PC-9 (cell line): ENCODE measurements at regions of chrX and their contacts with region 1.

Region 1: GRCh38 chrX:16658284-16658683 is 8.3 kb downstream of the S100G start:
- DNase-seq: no peak
- H3K4me3 ChIP-seq: no peak overlapping the region
- H3K27ac ChIP-seq: no peak overlapping the region
- H3K4me1 ChIP-seq: no peaks in the 10 kb centered on the region
- H3K27me3 ChIP-seq: no peaks in the 10 kb centered on the region
- CTCF ChIP-seq: no peak

Region 2: DNA sequence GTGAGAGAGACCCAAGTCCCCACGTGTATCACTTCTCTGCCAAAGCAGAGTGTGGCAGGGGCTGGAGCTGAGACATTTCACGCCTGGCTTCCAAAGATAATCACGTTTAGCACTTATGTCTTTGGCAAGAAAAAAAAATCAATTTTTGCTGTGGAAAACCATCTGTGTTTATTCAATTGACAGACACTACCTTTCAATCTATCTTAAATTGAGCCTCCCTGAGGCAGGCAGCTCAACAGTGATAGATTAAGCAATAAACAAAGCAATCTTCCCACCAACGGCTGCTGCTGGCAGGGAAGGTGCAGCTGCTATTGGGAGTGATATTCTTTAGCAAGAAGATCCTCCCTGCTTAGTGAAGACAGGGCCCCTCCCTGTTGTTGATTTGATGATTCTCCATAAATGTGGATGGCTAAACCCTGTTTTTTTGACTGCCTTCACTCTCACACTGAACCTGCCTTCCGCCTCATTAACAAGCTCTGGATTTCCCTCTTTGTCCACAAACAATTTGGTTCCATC is 502.6 kb before region 1 on chrX:
- CTCF ChIA-PET with region 1: no interaction called
- POLR2A ChIA-PET with region 1: interaction called, 14 read pairs
- intact Hi-C with region 1: no loop called
- DNase-seq: no peak
- H3K4me3 ChIP-seq: no peak overlapping the region
- H3K27ac ChIP-seq: no peak overlapping the region
- H3K4me1 ChIP-seq: peaks cover 6% of the 10 kb centered on the region; the same call in 1 of the 2 replicates
- H3K27me3 ChIP-seq: no peaks in the 10 kb centered on the region
- CTCF ChIP-seq: no peak

Region 3: DNA sequence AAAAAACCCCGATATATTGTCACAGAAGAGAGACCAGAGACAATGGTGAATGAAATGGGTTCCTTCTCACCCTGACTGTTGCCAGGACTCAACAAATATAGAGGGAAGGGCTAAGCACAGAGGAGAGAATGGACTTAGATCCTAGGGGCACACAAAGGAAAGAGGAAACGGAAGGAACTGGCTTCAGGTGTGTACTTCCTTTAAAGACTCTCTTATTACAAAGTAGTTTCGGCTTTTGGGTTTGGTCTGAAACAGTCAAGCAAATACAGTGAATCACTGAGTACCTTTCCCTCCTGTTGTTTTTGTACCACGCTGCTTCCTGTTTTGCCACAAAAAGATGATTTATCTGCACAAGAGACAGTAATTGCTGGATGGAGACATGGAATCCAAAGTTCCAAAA is 54.5 kb before region 1 on chrX:
- CTCF ChIA-PET with region 1: no interaction called
- POLR2A ChIA-PET with region 1: no interaction called
- intact Hi-C with region 1: loop called (anchors 10 kb)
- DNase-seq: no peak
- H3K4me3 ChIP-seq: no peak overlapping the region
- H3K27ac ChIP-seq: no peak overlapping the region
- H3K4me1 ChIP-seq: no peaks in the 10 kb centered on the region
- H3K27me3 ChIP-seq: no peaks in the 10 kb centered on the region
- CTCF ChIP-seq: no peak

Region 4: DNA sequence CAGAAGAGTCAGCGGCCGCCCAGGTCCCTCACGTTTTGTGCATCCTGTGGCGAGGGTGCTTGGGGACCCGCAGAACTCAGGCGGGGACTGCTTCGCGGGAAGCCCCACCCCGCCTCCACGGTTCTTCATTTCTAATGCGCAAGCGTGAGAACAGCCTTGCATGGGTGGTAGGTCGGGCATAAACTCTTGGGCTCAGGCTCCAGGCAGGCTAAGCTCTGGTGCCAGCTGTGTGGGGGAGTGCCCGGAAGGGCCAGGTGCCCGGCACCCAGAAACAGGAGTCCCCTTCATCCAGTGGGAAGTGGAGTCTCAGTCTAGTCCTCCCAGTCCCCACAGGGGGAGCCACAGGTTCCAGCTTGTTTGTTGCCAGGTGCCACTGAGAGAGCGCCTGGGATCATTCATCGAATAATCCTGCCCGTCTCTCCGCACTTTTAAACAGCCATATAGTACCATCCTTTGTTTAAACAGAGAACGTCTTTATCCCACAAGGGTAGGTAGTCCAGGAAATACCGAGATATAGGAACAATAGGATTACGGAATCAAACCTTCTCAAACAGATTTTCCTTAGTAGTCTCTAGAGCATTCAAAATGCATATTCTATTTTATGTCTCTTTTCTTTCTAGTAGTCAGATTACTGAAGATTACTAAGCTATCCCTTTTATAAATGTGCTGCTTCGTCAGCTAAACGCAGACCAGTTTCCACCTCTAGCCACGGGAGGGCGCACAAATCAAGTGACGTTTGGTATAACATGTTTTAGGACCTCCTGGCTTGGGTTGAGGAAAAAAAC is 224.6 kb after region 1 on chrX:
- CTCF ChIA-PET with region 1: no interaction called
- POLR2A ChIA-PET with region 1: no interaction called
- intact Hi-C with region 1: no loop called
- DNase-seq: peak; percentile 56 to 65
- H3K4me3 ChIP-seq: peak overlapping the region; percentile 70
- H3K27ac ChIP-seq: peak overlapping the region; percentile 71
- H3K4me1 ChIP-seq: 0 out of 2 replicates have a peak, but pooled peaks cover 4% of the 10 kb centered on the region
- H3K27me3 ChIP-seq: no peaks in the 10 kb centered on the region
- CTCF ChIP-seq: peak; percentile 83